WTC11 (cell line): ENCODE measurements at regions of chr17 and their contacts with region 1.

Region 1: GRCh38 chr17:74361230-74362068 is at the start of gene BTBD17:
- DNase-seq: peak; percentile 87
- ATAC-seq: peak; percentile 83
- H3K4me3 Mint-ChIP-seq: peak within 1 kb of the TSS; percentile 59
- H3K27ac Mint-ChIP-seq: no peak within 1 kb of the TSS; the same call in 1 of the 2 replicates
- H3K4me1 Mint-ChIP-seq: peaks cover 31% of the 10 kb centered on the region
- H3K27me3 Mint-ChIP-seq: peaks cover 14% of the 10 kb centered on the region
- CTCF ChIP-seq: peak; percentile 78
- total RNA-seq, gene BTBD17: 0.94 to 2.1 TPM (median 2.0 TPM) in 3 replicates

Region 2: GRCh38 chr17:74176546-74177001 is 184.9 kb before region 1 on chr17:
- CTCF ChIA-PET with region 1: no interaction called
- POLR2A ChIA-PET with region 1: no interaction called
- DNase-seq: peak; percentile 81
- ATAC-seq: peak; percentile 89
- H3K4me3 Mint-ChIP-seq: no peak overlapping the region
- H3K27ac Mint-ChIP-seq: no peak overlapping the region
- H3K4me1 Mint-ChIP-seq: peaks cover 9% of the 10 kb centered on the region; the same call in 1 of the 2 replicates
- H3K27me3 Mint-ChIP-seq: peaks cover 4% of the 10 kb centered on the region
- CTCF ChIP-seq: peak; percentile 81

Region 3: DNA sequence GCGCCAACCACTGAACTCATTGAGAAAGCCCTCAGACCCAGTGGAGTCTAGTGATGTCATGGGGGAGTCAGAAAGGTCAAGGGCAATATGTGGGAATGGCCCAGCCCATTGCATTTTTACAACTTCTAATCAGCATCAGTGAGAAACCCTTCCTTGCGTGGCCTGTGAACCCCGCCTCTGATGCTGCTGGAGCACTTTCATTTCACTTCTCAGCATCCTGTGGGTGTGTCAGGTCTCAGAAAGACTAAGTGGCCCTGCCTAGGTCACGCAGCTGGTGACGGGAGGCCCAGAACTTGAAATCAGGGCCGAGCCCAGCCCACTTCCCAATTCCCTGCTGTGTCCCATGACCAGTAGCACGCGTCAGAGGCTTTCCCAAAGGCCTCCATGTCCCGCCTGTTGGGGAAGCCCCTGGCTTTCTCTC is 81.3 kb before region 1 on chr17:
- CTCF ChIA-PET with region 1: interaction called, 23 read pairs
- POLR2A ChIA-PET with region 1: no interaction called
- DNase-seq: no peak
- ATAC-seq: no peak
- H3K4me3 Mint-ChIP-seq: no peak overlapping the region
- H3K27ac Mint-ChIP-seq: peak overlapping the region; percentile 27; the same call in 1 of the 2 replicates
- H3K4me1 Mint-ChIP-seq: peaks cover 4% of the 10 kb centered on the region; the same call in 1 of the 2 replicates
- H3K27me3 Mint-ChIP-seq: peaks cover 9% of the 10 kb centered on the region
- CTCF ChIP-seq: no peak

Region 4: GRCh38 chr17:74305865-74306654 is 55.4 kb before region 1 on chr17:
- CTCF ChIA-PET with region 1: interaction called, 37 read pairs
- POLR2A ChIA-PET with region 1: no interaction called
- DNase-seq: no peak
- ATAC-seq: no peak
- H3K4me3 Mint-ChIP-seq: no peak overlapping the region
- H3K27ac Mint-ChIP-seq: no peak overlapping the region
- H3K4me1 Mint-ChIP-seq: no peaks in the 10 kb centered on the region
- H3K27me3 Mint-ChIP-seq: no peaks in the 10 kb centered on the region
- CTCF ChIP-seq: no peak

Region 5: DNA sequence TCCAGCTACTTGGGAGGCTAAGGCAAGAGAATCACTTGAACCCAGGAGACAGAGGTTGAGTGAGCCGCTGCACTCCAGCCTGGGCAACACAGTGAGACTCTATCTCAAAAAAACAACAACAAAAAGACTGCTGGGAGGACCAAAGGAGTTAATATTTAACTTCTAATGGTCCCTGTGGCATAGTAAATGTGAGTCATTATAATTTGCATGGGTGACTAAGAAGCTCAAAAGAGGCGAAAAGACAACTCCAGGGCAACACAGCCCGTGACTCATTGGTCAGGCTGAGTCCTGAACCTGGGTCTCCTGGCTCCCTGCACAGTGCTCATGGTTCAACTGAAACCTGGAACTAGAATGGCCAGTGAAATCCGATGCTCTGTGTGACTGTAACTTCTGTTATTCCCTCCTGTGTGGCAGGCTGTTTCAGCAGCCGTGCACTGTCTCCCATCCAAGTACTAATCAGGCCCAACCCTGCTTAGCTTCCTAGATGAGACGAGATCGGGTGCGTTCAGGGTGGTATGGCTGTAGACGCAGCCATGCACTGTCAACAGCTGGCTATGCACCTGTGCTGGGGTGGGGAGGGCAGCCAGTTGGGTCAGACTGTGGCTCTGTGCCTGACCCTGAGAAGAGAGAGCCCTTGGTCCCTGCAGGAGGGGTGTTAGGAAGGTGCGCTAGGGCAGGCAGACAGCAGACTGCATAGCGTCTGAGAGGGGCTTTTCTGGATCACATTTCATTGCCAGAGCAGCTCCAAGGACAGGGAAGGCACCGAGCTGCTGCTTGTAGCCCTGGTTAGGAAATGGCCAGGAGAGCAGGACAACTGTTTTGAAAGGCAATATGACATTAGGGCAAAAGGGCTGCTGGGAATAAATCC is 56.0 kb after region 1 on chr17:
- CTCF ChIA-PET with region 1: no interaction called
- POLR2A ChIA-PET with region 1: no interaction called
- DNase-seq: no peak
- ATAC-seq: peak; percentile 18
- H3K4me3 Mint-ChIP-seq: no peak overlapping the region
- H3K27ac Mint-ChIP-seq: no peak overlapping the region
- H3K4me1 Mint-ChIP-seq: peaks cover 6% of the 10 kb centered on the region; the same call in 1 of the 2 replicates
- H3K27me3 Mint-ChIP-seq: no peaks in the 10 kb centered on the region; the same call in 1 of the 2 replicates
- CTCF ChIP-seq: no peak

Region 6: GRCh38 chr17:74437702-74438101 is 76.3 kb after region 1 on chr17:
- CTCF ChIA-PET with region 1: interaction called, 15 read pairs
- POLR2A ChIA-PET with region 1: no interaction called
- DNase-seq: peak; percentile 52
- ATAC-seq: no peak
- H3K4me3 Mint-ChIP-seq: no peak overlapping the region
- H3K27ac Mint-ChIP-seq: no peak overlapping the region
- H3K4me1 Mint-ChIP-seq: peaks cover 18% of the 10 kb centered on the region
- H3K27me3 Mint-ChIP-seq: peaks cover 11% of the 10 kb centered on the region
- CTCF ChIP-seq: peak; percentile 82

Region 7: GRCh38 chr17:74493381-74493833 is 132.0 kb after region 1 on chr17:
- CTCF ChIA-PET with region 1: interaction called, 11 read pairs
- POLR2A ChIA-PET with region 1: no interaction called
- DNase-seq: peak; percentile 88
- ATAC-seq: peak; percentile 96
- H3K4me3 Mint-ChIP-seq: no peak overlapping the region
- H3K27ac Mint-ChIP-seq: no peak overlapping the region
- H3K4me1 Mint-ChIP-seq: peaks cover 3% of the 10 kb centered on the region; the same call in 1 of the 2 replicates
- H3K27me3 Mint-ChIP-seq: peaks cover 6% of the 10 kb centered on the region
- CTCF ChIP-seq: peak; percentile 83